ENCODE measurements at regions of chr7 and their contacts with region 1.

Region 1: DNA sequence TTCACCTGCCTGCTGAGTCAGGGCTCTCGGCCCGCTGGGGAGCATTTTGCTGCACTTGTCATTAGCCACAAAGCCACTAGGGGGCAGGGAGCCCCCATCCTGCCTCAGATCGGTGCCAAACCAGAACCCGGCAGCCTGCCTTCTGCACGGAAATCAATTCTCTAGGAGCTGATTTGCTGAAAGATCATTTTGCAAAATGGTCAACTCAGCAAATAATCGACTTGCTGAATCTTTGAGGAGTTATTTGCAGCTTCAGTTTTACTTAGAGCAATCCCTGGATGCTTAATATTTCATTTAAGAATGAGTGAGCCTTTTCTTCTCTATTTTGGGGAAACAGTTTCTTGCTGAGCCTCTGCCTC is 1.7 kb upstream of the GIMAP8 start:
- DNase-seq: peak; percentile 77 to 91 (median 83)
- H3K4me3 ChIP-seq: peak overlapping the region; percentile 36
- H3K4me3 Mint-ChIP-seq: peak overlapping the region; percentile 98 to 100 (median 99)
- H3K27ac ChIP-seq: no peak overlapping the region
- H3K27ac Mint-ChIP-seq: peak overlapping the region; percentile 78 to 98 (median 96)
- H3K4me1 ChIP-seq: peaks cover 38% of the 10 kb centered on the region
- H3K4me1 Mint-ChIP-seq: peaks cover 51 to 58% (median 52%) of the 10 kb centered on the region in 3 donors
- H3K27me3 ChIP-seq: no peaks in the 10 kb centered on the region
- H3K27me3 Mint-ChIP-seq: peaks cover 0 to 4% of the 10 kb centered on the region in 2 donors

Region 2: DNA sequence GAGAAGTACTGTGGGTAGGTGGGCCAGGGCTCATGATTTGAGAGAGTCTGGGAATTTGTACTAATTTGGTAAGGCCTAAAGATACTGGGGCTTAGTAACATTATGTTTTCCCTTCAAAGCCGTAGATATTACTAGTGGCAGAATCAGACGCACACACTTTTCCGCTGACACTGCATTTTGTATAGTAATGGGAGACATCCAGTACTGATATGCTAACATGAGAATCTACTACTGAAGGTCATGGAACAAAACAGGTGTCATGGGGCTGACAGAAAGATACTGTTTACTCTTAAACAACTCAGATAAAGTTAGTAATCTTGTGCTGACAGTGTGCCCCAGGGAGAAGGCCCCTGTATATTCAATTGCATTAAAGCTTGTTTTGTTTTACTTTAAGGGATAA is 54.8 kb after region 1 on chr7:
- CTCF ChIA-PET with region 1: interaction called, 11 read pairs
- POLR2A ChIA-PET with region 1: interaction called, 4 read pairs
- DNase-seq: no peak
- H3K4me3 ChIP-seq: peak overlapping the region; percentile 5
- H3K4me3 Mint-ChIP-seq: peak overlapping the region in 6 of 7 donors; percentile 56 to 73 (median 68)
- H3K27ac ChIP-seq: peak overlapping the region; percentile 10
- H3K27ac Mint-ChIP-seq: peak overlapping the region; percentile 52 to 91 (median 84)
- H3K4me1 ChIP-seq: peaks cover 58% of the 10 kb centered on the region
- H3K4me1 Mint-ChIP-seq: peaks cover 83 to 94% (median 94%) of the 10 kb centered on the region in 3 donors
- H3K27me3 ChIP-seq: no peaks in the 10 kb centered on the region
- H3K27me3 Mint-ChIP-seq: no peaks in the 10 kb centered on the region

Region 3: DNA sequence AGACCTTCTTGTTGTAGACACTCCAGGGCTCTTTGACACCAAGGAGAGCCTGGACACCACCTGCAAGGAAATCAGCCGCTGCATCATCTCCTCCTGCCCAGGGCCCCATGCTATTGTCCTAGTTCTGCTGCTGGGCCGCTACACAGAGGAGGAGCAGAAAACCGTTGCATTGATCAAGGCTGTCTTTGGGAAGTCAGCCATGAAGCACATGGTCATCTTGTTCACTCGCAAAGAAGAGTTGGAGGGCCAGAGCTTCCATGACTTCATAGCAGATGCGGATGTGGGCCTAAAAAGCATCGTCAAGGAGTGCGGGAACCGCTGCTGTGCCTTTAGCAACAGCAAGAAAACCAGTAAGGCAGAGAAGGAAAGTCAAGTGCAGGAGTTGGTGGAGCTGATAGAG is 71.4 kb after region 1 on chr7:
- CTCF ChIA-PET with region 1: interaction called, 99 read pairs
- POLR2A ChIA-PET with region 1: interaction called, 76 read pairs
- DNase-seq: peak in 1 of 5 donors; percentile 47
- H3K4me3 ChIP-seq: peak overlapping the region; percentile 65
- H3K4me3 Mint-ChIP-seq: peak overlapping the region; percentile 96 to 100 (median 100)
- H3K27ac ChIP-seq: peak overlapping the region; percentile 38
- H3K27ac Mint-ChIP-seq: peak overlapping the region; percentile 76 to 97 (median 90)
- H3K4me1 ChIP-seq: peaks cover 22% of the 10 kb centered on the region
- H3K4me1 Mint-ChIP-seq: peaks cover 40 to 51% (median 43%) of the 10 kb centered on the region in 3 donors
- H3K27me3 ChIP-seq: no peaks in the 10 kb centered on the region
- H3K27me3 Mint-ChIP-seq: no peaks in the 10 kb centered on the region

Region 4: DNA sequence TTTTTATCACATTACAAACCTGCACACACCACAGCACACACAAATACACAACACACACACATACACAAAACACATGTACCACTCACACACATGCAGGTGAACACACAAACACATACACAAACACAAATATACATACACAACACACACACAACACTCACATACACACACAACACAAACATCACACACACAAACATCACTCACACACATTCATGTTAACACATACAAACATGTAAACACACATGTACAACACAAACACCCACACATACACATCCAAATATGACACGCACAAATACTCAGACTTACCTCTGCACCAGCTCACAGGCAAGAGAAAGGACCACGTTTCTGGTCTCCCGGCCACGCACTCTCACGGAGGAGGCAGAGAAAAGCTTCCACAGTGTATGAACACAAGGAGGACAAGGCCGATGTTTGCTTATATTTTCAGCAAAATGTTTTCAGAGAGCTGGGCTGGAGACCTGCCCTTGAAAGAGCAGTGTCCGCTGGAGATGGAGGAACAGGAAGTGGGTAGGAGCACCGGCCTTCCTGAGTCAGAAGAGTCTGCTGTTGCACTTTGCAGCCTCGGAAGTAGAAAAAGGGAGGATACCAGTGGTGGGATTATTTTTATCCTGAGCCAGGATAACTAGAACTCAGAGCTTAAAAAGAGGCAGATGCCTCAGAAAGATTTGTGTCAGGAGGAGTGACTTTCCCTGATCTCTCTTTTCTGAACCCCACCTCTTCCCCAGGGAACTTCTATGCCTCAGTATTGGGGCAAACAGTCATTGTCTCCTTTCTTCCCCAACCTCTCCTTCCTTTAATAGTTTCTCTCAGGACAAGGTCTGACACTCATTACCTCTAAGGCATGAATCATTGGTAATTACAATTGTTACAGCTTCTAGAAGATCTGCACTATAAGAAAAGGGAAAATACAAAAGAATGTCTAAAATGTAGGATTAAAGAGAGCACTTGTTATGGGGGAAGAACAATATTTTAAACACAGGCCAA is 183.4 kb after region 1 on chr7 and contains the start of gene GIMAP6:
- CTCF ChIA-PET with region 1: interaction called, 19 read pairs
- POLR2A ChIA-PET with region 1: interaction called, 15 read pairs
- DNase-seq: peak; percentile 10 to 59 (median 47)
- H3K4me3 ChIP-seq: peak within 1 kb of the TSS; percentile 67
- H3K4me3 Mint-ChIP-seq: peak within 1 kb of the TSS; percentile 95 to 100 (median 97)
- H3K27ac ChIP-seq: peak within 1 kb of the TSS; percentile 47
- H3K27ac Mint-ChIP-seq: peak within 1 kb of the TSS; percentile 90 to 98 (median 94)
- H3K4me1 ChIP-seq: peaks cover 67% of the 10 kb centered on the region
- H3K4me1 Mint-ChIP-seq: peaks cover 83 to 89% (median 87%) of the 10 kb centered on the region in 3 donors
- H3K27me3 ChIP-seq: no peaks in the 10 kb centered on the region
- H3K27me3 Mint-ChIP-seq: no peaks in the 10 kb centered on the region
- total RNA-seq, gene GIMAP6: 44.9 to 45.8 TPM

Region 5: GRCh38 chr7:150716368-150716767 is 267.6 kb after region 1 on chr7 and contains the start of gene GIMAP1:
- CTCF ChIA-PET with region 1: interaction called, 33 read pairs
- POLR2A ChIA-PET with region 1: interaction called, 4 read pairs
- DNase-seq: peak; percentile 24 to 81 (median 71)
- H3K4me3 ChIP-seq: peak within 1 kb of the TSS; percentile 77
- H3K4me3 Mint-ChIP-seq: peak within 1 kb of the TSS; percentile 94 to 100 (median 100)
- H3K27ac ChIP-seq: peak within 1 kb of the TSS; percentile 79
- H3K27ac Mint-ChIP-seq: peak within 1 kb of the TSS; percentile 84 to 99 (median 98)
- H3K4me1 ChIP-seq: peaks cover 51% of the 10 kb centered on the region
- H3K4me1 Mint-ChIP-seq: peaks cover 60 to 80% (median 75%) of the 10 kb centered on the region in 3 donors
- H3K27me3 ChIP-seq: no peaks in the 10 kb centered on the region
- H3K27me3 Mint-ChIP-seq: no peaks in the 10 kb centered on the region
- total RNA-seq, gene GIMAP1: 9.8 to 10.0 TPM

Region 6: GRCh38 chr7:150748376-150748775 is 299.6 kb after region 1 on chr7:
- CTCF ChIA-PET with region 1: interaction called, 60 read pairs
- POLR2A ChIA-PET with region 1: interaction called, 4 read pairs
- DNase-seq: no peak
- H3K4me3 ChIP-seq: peak overlapping the region; percentile 4
- H3K4me3 Mint-ChIP-seq: peak overlapping the region; percentile 19 to 64 (median 47)
- H3K27ac ChIP-seq: no peak overlapping the region
- H3K27ac Mint-ChIP-seq: peak overlapping the region; percentile 73 to 98 (median 92)
- H3K4me1 ChIP-seq: peaks cover 96% of the 10 kb centered on the region
- H3K4me1 Mint-ChIP-seq: peaks cover 87 to 98% (median 96%) of the 10 kb centered on the region in 3 donors
- H3K27me3 ChIP-seq: no peaks in the 10 kb centered on the region
- H3K27me3 Mint-ChIP-seq: no peaks in the 10 kb centered on the region

Region 7: GRCh38 chr7:150759479-150759878 is 310.7 kb after region 1 on chr7:
- CTCF ChIA-PET with region 1: interaction called, 60 read pairs
- POLR2A ChIA-PET with region 1: interaction called, 18 read pairs
- DNase-seq: no peak
- H3K4me3 ChIP-seq: no peak overlapping the region
- H3K4me3 Mint-ChIP-seq: no peak overlapping the region
- H3K27ac ChIP-seq: no peak overlapping the region
- H3K27ac Mint-ChIP-seq: no peak overlapping the region
- H3K4me1 ChIP-seq: peaks cover 27% of the 10 kb centered on the region
- H3K4me1 Mint-ChIP-seq: peaks cover 26 to 30% (median 29%) of the 10 kb centered on the region in 3 donors
- H3K27me3 ChIP-seq: no peaks in the 10 kb centered on the region
- H3K27me3 Mint-ChIP-seq: peaks cover 0 to 3% of the 10 kb centered on the region in 2 donors

Measured in CD8-positive, alpha-beta memory T cell (primary cell).